Activated CD8-positive, alpha-beta memory T cell treated with anti-CD3 and anti-CD28 coated beads, Interleukin-2, amount 10 ng/mL, durations not matched to agents 7 days and 5 days (primary cell): ENCODE measurements at regions of chr7 and their contacts with region 1.

Region 1: DNA sequence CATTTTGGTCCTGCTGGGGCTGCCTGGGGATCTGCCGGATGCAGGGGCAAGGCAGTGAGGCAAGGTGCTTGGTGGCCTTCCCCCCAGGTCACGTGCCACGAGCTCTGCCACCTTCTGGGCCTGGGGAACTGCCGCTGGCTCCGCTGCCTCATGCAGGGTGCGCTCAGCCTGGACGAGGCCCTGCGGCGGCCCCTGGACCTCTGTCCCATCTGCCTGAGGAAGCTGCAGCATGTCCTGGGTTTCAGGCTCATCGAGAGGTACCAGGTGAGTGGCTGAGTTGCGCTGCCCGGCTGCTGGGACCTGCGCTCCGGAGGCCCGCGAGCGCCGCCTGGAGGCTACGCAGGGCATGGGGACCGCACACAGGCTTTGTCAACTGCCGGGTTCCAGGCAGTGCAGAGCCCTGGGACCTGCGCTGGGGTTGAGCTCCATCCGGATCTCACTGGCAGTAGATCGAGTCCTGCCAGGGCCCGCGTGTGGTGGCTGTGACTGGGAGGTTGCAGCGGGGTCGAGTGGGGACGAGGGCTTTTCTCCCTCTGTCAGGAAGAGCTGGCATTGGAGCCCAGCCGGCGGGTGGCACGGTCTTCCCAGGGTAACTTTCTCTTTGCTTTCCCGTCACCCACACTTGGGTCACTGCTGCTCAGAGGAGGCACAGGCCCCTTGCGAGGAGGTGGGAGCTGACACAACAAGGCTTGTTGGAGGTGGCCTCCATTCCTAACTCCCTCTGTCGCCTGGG is 21.7 kb downstream of the AMZ1 start:
- DNase-seq: peak; percentile 91
- ATAC-seq: peak; percentile 88
- H3K4me3 Mint-ChIP-seq: peak overlapping the region; percentile 74
- H3K27ac Mint-ChIP-seq: peak overlapping the region; percentile 81
- H3K4me1 Mint-ChIP-seq: peaks cover 36% of the 10 kb centered on the region
- H3K27me3 Mint-ChIP-seq: peaks cover 33% of the 10 kb centered on the region

Region 2: DNA sequence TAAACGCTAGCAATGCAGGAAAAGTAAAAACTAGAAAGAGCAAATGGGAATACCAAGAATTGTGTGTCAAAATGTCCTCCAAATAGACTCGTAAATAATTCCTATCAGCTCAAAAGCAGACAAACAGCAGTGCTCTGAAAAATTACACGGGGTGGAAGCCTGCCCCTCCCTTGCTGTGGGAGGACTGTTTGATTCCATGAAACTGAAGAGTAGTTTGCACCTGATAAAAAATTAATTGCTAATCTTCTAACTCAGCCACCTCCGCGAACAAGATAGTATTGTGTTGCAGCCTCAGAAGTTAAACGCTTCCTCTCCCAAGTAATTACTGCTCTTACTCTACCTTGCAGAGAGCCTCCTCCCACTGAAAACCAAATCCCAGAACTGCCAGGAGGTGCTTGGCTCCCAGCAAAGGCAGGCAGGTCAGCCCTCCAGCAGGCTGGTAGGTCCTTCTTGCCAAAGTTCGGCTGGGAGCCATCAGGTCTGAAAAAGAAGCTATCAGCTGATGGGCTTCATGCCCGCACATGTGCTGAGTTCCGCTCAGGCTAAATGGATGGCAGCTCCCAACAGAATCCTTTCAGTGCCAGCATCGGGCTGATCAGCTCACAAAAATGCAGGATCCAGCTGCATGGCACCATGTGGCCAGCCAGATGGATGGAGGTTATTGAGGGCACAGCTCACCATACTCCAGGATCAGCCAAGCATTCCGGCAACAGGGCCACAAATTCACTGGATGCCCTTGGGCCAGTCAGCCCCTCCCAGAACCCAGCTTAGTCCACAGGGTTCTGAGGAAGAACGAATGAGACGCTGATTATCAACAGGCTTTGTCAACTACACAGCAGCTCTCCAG is 514.1 kb before region 1 on chr7:
- CTCF ChIA-PET with region 1: no interaction called
- DNase-seq: no peak
- ATAC-seq: no peak
- H3K4me3 Mint-ChIP-seq: no peak overlapping the region
- H3K27ac Mint-ChIP-seq: no peak overlapping the region
- H3K4me1 Mint-ChIP-seq: no peaks in the 10 kb centered on the region
- H3K27me3 Mint-ChIP-seq: no peaks in the 10 kb centered on the region

Region 3: GRCh38 chr7:2567679-2568278 is 141.9 kb before region 1 on chr7:
- CTCF ChIA-PET with region 1: interaction called, 11 read pairs
- DNase-seq: no peak
- ATAC-seq: no peak
- H3K4me3 Mint-ChIP-seq: no peak overlapping the region
- H3K27ac Mint-ChIP-seq: no peak overlapping the region
- H3K4me1 Mint-ChIP-seq: peaks cover 9% of the 10 kb centered on the region
- H3K27me3 Mint-ChIP-seq: no peaks in the 10 kb centered on the region

Region 4: DNA sequence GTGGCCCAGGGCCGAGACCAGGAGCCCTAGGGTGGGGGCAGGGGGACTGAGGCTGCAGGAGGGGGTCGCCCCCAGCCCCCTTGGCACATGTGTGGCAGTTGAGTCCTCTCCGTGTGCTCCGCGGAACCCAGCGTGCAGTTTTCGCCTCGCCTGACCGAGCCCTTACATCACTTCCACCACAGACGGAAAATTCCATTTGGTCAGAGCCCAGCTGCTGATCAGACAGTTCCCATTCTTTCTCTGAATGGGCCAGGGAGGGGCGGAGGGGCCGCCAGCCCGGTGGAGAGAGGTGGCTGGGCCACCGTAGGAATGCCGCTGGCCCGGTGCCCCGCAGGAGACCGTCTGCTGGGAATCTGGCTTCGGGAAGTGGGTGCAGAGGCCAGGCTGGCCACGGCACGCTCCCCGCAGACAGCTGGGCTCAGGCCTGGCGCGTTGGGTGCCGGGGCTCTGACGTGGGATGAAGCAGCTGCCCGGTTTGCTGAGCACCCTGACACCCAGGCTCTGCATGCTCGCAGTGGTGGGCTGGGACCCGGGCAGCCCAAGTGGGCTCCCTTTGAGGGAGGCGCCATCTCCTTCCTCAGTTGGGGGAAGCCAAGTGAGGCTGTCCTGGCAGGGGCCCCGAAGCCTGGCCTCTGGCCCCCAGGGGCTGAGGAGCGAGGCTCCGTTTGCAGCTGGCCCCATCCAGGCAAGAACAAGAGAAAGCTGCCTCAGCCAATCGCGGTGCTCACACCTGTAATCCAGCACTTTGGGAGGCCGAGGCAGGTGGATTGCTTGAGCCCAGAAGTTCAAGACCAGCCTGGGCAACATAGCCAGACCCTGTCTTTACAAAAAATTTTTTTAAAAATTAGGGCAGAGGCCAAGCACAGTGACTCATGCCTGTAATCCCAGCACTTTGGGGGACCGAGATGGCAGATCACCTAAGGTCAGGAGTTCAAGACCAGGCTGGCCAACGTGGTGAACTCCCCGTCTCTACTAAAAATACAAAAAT is 68.0 kb before region 1 on chr7:
- CTCF ChIA-PET with region 1: interaction called, 50 read pairs
- DNase-seq: no peak
- ATAC-seq: no peak
- H3K4me3 Mint-ChIP-seq: no peak overlapping the region
- H3K27ac Mint-ChIP-seq: no peak overlapping the region
- H3K4me1 Mint-ChIP-seq: peaks cover 21% of the 10 kb centered on the region
- H3K27me3 Mint-ChIP-seq: no peaks in the 10 kb centered on the region

Region 5: DNA sequence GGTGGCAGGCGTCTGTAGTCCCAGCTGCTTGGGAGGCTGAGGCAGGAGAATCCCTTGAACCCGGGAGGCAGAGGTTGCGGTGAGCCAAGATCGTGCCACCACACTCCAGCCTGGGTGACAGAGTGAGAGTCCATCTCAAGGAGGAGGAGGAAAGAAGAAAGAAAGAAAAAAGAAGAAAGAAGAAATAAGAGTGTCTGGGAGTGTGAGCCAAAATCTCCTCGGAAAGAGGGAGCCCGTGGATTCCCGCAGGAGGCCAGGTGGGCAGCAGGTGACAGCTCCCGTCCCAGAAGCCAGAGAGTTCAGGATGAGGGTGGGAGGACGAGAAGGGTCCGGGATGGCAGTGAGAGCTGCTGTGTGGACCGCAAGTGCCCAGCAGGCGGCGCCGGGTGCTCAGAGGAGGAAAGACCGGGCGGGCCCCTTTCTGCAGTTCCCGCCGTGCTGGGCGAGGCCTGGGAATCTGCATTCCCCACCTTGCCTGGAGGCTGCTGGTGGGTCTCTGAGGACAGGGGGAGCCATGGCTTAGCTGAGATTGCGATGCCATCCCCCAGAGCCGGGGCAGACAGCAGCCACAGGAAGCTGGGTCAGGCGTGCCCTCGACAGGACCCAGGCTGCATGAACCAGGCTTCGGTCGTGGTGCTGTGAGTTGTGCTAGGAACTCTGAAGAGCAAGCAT is 38.9 kb before region 1 on chr7:
- CTCF ChIA-PET with region 1: interaction called, 317 read pairs
- DNase-seq: peak; percentile 80
- ATAC-seq: peak; percentile 95
- H3K4me3 Mint-ChIP-seq: no peak overlapping the region
- H3K27ac Mint-ChIP-seq: no peak overlapping the region
- H3K4me1 Mint-ChIP-seq: peaks cover 11% of the 10 kb centered on the region
- H3K27me3 Mint-ChIP-seq: peaks cover 43% of the 10 kb centered on the region

Region 6: GRCh38 chr7:2688409-2689331 is 21.0 kb before region 1 on chr7:
- CTCF ChIA-PET with region 1: interaction called, 70 read pairs
- DNase-seq: no peak
- ATAC-seq: peak; percentile 42
- H3K4me3 Mint-ChIP-seq: peak overlapping the region; percentile 53
- H3K27ac Mint-ChIP-seq: no peak overlapping the region
- H3K4me1 Mint-ChIP-seq: peaks cover 32% of the 10 kb centered on the region
- H3K27me3 Mint-ChIP-seq: peaks cover 72% of the 10 kb centered on the region

Region 7: DNA sequence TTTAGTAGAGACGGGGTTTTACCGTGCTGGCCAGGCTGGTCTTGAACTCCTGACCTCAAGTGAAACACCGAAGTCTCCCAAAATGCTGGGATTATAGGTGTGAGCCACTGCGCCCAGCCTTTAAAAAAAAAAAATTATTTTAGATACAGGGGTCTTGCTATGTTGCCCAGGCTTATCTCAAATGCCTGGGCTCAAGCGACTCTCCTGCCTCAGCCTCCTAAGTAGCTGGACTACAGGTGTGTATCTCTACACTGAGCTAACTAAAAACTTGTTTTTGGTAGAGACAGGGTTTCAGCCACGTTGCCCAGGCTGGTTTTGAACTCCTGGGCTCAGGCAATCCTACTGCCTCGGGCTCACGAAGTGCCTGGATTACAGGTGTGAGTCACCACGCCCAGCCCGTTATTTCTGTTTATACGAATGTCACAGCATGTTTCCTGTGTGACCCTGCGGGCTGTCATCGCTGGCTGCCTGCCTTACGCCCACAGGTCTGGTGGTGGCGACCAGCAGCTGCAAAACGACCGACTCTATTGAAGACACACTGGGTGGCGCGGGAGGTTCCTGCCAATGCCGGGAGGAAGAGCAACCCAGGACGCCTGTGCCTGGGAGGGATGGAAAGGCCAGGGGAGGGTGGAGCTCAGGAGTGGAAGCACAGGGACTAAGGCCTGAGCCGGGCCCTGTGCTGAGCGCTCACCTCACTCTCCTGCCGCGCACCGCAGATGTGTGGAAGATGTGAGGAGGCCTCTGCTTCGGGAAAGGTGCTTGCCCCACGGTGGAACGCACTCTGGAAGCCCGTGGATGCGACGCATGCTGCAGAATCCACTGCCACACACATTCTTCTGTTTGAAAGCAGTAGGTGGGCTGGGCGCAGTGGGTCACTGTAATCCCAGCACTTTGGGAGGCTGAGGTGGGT is 11.1 kb after region 1 on chr7:
- CTCF ChIA-PET with region 1: interaction called, 77 read pairs
- DNase-seq: peak; percentile 91
- ATAC-seq: peak; percentile 85
- H3K4me3 Mint-ChIP-seq: no peak overlapping the region
- H3K27ac Mint-ChIP-seq: peak overlapping the region; percentile 3
- H3K4me1 Mint-ChIP-seq: peaks cover 39% of the 10 kb centered on the region
- H3K27me3 Mint-ChIP-seq: no peaks in the 10 kb centered on the region